Activated naive CD4-positive, alpha-beta T cell treated with anti-CD3 and anti-CD28 coated beads for 36 hours (primary cell): ENCODE measurements at regions of chr2 and their contacts with region 1.

Region 1: GRCh38 chr2:170715062-170715931 is at the start of gene SP5:
- DNase-seq: no peak
- H3K4me3 Mint-ChIP-seq: peak within 1 kb of the TSS; percentile 76
- H3K27ac Mint-ChIP-seq: no peak within 1 kb of the TSS
- H3K4me1 Mint-ChIP-seq: peaks cover 33% of the 10 kb centered on the region
- H3K27me3 Mint-ChIP-seq: peaks cover 67% of the 10 kb centered on the region
- total RNA-seq, gene SP5: not detected

Region 2: DNA sequence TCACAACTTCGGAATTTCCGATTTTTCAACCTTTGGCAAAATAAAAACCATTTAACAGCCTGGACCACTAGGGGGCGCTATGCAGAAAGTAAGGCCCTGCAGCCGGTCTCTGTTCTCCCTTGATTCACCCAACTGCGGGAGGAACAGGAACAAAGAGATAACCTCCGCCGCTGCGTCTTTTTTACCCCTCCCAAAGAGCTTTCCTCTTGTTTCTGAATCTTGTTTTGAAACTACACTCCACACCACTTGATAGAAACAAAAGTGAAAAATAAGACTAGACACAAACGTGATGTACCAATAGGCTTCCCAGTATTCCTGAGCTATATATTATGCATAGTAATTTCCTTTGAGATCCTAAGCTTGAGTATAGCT is 306.1 kb before region 1 on chr2:
- CTCF ChIA-PET with region 1: interaction called, 6 read pairs
- intact Hi-C with region 1: loop called (anchors 5 kb)
- DNase-seq: peak; percentile 88
- H3K4me3 Mint-ChIP-seq: peak overlapping the region; percentile 44
- H3K27ac Mint-ChIP-seq: no peak overlapping the region
- H3K4me1 Mint-ChIP-seq: peaks cover 7% of the 10 kb centered on the region
- H3K27me3 Mint-ChIP-seq: peaks cover 26% of the 10 kb centered on the region

Region 3: DNA sequence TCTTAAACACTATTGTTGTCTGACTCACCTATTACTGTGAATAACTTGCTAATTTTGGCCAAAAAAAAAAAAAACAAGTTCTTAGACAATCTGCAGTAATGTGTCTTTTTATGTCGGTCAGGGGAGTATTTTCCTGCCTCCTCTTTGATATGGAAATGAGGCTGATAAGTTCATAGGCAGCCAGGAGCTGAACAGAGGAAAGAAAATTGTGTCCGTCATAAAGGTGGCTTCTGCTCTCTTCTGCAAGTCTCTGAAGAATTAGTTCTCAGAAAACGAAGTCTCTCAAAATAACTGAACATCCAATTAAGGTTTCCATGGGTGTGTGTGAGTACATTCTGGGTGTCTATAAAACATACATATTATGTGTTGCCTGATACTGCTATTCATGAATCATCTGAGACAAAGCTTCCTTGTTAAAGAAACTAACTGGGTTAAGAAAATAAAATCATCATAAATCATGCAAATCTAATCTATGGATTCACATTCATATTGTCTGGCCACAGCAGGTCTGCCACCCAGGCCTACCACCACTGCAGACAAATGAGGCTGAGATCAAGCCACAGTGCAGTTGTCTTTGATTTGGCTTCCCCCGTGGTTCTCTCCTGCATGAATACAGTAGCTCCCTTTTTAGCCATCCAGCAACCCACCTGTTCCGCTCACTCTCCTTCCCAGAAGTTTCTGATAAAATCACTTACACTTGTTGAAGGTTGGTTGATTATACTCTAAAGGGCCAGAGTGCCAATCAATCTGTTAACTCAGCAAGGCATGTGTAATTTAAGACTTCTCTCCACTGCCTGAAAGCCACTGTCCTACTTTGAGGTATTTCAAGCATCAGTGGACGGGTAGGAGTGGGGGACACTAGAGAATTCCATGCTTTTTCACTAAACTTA is 19.5 kb before region 1 on chr2:
- CTCF ChIA-PET with region 1: no interaction called
- intact Hi-C with region 1: no loop called
- DNase-seq: no peak
- H3K4me3 Mint-ChIP-seq: no peak overlapping the region
- H3K27ac Mint-ChIP-seq: no peak overlapping the region
- H3K4me1 Mint-ChIP-seq: no peaks in the 10 kb centered on the region
- H3K27me3 Mint-ChIP-seq: peaks cover 5% of the 10 kb centered on the region

Region 4: GRCh38 chr2:170770606-170771420 is 55.5 kb after region 1 on chr2:
- CTCF ChIA-PET with region 1: interaction called, 3 read pairs
- intact Hi-C with region 1: loop called (anchors 1 kb)
- DNase-seq: peak; percentile 69
- H3K4me3 Mint-ChIP-seq: peak overlapping the region; percentile 85
- H3K27ac Mint-ChIP-seq: no peak overlapping the region
- H3K4me1 Mint-ChIP-seq: peaks cover 7% of the 10 kb centered on the region
- H3K27me3 Mint-ChIP-seq: peaks cover 9% of the 10 kb centered on the region

Region 5: GRCh38 chr2:171416009-171416926 is 701.0 kb after region 1 on chr2:
- CTCF ChIA-PET with region 1: no interaction called
- intact Hi-C with region 1: no loop called
- DNase-seq: peak; percentile 96
- H3K4me3 Mint-ChIP-seq: peak overlapping the region; percentile 32
- H3K27ac Mint-ChIP-seq: peak overlapping the region; percentile 92
- H3K4me1 Mint-ChIP-seq: peaks cover 38% of the 10 kb centered on the region
- H3K27me3 Mint-ChIP-seq: no peaks in the 10 kb centered on the region